PC-3 (cell line): ENCODE measurements at regions of chr22 and their contacts with region 1.

Region 1: GRCh38 chr22:43273902-43274484 is 69.2 kb downstream of the SCUBE1 start:
- DNase-seq: peak; percentile 54
- ATAC-seq: peak; percentile 66
- H3K4me3 ChIP-seq: no peak overlapping the region
- H3K27ac ChIP-seq: no peak overlapping the region
- H3K4me1 ChIP-seq: peaks cover 12% of the 10 kb centered on the region; the same call in 1 of the 2 replicates
- H3K27me3 ChIP-seq: peaks cover 1% of the 10 kb centered on the region; the same call in 1 of the 2 replicates
- CTCF ChIP-seq: peak; percentile 72

Region 2: DNA sequence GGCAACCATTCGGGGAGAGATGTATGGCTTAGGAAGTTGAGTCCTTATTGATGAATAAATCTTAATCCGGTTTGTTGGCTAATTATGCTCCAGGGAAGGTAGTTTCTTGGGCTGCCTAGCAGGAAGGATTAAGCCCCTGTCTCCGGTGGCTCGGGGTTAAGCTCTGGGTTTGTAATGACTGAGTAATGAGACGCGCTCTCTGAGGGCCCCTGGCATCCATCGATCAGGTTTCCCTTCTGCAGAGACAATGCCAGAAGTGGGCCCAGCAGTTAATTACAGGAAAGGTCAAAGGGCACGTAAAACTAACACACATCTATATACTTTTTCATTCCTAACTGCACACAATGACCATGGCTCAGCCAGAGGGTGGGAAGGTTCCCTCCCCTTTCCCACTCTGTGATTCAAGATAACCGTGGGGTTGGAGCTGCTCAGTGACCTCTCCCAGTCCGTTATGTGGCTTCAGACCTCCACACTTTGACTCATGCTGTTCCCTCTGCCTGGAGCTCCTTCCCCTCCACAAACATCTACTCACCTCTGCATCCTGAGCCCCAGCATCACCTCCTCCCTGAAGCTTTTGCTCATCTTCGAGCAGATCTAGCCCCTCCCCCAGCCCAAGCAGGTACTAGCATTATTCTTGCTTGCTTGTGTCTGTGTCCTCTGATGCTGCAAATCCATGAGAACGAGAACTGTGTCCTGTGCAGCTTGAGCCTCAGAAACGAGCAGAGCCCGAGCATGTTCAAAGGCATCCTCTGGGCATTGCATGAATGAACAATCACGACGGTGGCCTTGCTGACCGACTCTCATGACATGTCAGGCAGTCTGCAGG is 52.6 kb after region 1 on chr22:
- CTCF ChIA-PET with region 1: no interaction called
- POLR2A ChIA-PET with region 1: no interaction called
- intact Hi-C with region 1: no loop called
- DNase-seq: no peak
- ATAC-seq: no peak
- H3K4me3 ChIP-seq: no peak overlapping the region
- H3K27ac ChIP-seq: no peak overlapping the region
- H3K4me1 ChIP-seq: no peaks in the 10 kb centered on the region
- H3K27me3 ChIP-seq: peaks cover 36% of the 10 kb centered on the region
- CTCF ChIP-seq: no peak

Region 3: DNA sequence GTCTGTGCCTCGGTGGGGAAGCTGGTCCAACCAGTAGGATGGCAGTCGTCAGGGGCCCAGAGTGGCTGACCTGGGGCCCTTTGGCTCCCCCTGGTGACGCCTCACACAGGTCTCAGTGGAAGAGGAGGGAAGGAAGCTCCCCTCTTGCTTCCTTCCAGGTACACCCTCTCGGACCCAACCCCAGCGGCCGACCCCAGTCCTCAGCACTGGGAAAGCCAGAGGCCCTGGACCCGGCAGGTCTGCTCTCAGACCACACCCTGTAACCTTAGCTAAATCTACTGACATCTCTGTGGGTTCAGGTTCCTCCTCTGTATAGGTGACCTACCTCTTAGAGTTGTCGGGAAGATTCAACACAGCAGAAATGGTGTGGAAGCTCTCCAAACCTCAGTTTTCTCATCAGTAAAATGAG is 72.5 kb after region 1 on chr22:
- CTCF ChIA-PET with region 1: interaction called, 14 read pairs
- POLR2A ChIA-PET with region 1: no interaction called
- intact Hi-C with region 1: loop called (anchors 1 kb)
- DNase-seq: peak; percentile 50
- ATAC-seq: peak; percentile 79
- H3K4me3 ChIP-seq: no peak overlapping the region
- H3K27ac ChIP-seq: no peak overlapping the region
- H3K4me1 ChIP-seq: no peaks in the 10 kb centered on the region
- H3K27me3 ChIP-seq: peaks cover 3% of the 10 kb centered on the region
- CTCF ChIP-seq: peak; percentile 66